ENCODE measurements at regions of chr6 and their contacts with region 1.

Region 1: GRCh38 chr6:37005061-37005810 is at the start of gene FGD2:
- DNase-seq: no peak
- H3K4me3 ChIP-seq: no peak within 1 kb of the TSS
- H3K27ac ChIP-seq: no peak within 1 kb of the TSS; the same call in 1 of the 2 replicates
- H3K4me1 ChIP-seq: no peaks in the 10 kb centered on the region
- H3K27me3 ChIP-seq: no peaks in the 10 kb centered on the region
- CTCF ChIP-seq: no peak
- EP300 ChIP-seq: no peak
- POLR2A ChIP-seq: no peak
- RAD21 ChIP-seq: no peak
- total RNA-seq, gene FGD2: 0.19 and 0.32 TPM in 2 replicates

Region 2: GRCh38 chr6:37029249-37029971 is 24.2 kb after region 1 on chr6:
- CTCF ChIA-PET with region 1: interaction called, 18 read pairs
- POLR2A ChIA-PET with region 1: no interaction called
- DNase-seq: peak in 1 of 2 experiments; percentile 82
- H3K4me3 ChIP-seq: no peak overlapping the region
- H3K27ac ChIP-seq: no peak overlapping the region; the same call in 1 of the 2 replicates
- H3K4me1 ChIP-seq: no peaks in the 10 kb centered on the region
- H3K27me3 ChIP-seq: no peaks in the 10 kb centered on the region
- CTCF ChIP-seq: peak; percentile 76 to 88 (median 80)
- EP300 ChIP-seq: no peak
- POLR2A ChIP-seq: no peak
- RAD21 ChIP-seq: peak; percentile 82 to 84

Measured in H1 (cell line).